ENCODE measurements at regions of chr3 and their contacts with region 1.

Region 1: GRCh38 chr3:97871801-97872524 is 50.2 kb downstream of the CRYBG3 start:
- DNase-seq: peak; percentile 96
- H3K4me3 ChIP-seq: peak overlapping the region in 1 of 3 experiments; percentile 16
- H3K27ac ChIP-seq: peak overlapping the region; percentile 87
- H3K4me1 ChIP-seq: peaks cover 25% of the 10 kb centered on the region
- H3K27me3 ChIP-seq: no peaks in the 10 kb centered on the region
- CTCF ChIP-seq: no peak

Region 2: DNA sequence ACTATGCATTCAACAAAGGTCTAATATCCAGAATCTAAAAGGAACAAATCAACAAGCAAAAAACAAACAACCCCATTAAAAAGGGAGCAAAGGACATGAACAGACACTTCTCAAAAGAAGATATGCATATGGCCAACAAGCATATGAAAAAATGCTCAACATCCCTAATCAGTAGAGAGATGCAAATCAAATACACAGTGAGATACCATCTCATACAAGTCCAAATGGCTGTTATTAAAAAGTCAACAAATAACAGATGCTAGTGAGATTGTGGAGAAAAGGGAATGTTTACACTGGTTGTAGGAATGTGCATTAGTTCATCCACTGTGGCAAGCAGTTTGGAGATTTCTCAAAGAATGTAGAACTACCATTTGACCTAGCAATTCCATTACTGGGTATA is 55.7 kb after region 1 on chr3:
- CTCF ChIA-PET with region 1: no interaction called
- dilution Hi-C with region 1: loop called (anchors 10 kb)
- in situ Hi-C with region 1: no loop called
- intact Hi-C with region 1: no loop called
- DNase-seq: no peak
- H3K4me3 ChIP-seq: no peak overlapping the region
- H3K27ac ChIP-seq: no peak overlapping the region
- H3K4me1 ChIP-seq: no peaks in the 10 kb centered on the region
- H3K27me3 ChIP-seq: no peaks in the 10 kb centered on the region
- CTCF ChIP-seq: no peak